Calu3 (cell line): ENCODE measurements at regions of chr5 and their contacts with region 1.

Region 1: DNA sequence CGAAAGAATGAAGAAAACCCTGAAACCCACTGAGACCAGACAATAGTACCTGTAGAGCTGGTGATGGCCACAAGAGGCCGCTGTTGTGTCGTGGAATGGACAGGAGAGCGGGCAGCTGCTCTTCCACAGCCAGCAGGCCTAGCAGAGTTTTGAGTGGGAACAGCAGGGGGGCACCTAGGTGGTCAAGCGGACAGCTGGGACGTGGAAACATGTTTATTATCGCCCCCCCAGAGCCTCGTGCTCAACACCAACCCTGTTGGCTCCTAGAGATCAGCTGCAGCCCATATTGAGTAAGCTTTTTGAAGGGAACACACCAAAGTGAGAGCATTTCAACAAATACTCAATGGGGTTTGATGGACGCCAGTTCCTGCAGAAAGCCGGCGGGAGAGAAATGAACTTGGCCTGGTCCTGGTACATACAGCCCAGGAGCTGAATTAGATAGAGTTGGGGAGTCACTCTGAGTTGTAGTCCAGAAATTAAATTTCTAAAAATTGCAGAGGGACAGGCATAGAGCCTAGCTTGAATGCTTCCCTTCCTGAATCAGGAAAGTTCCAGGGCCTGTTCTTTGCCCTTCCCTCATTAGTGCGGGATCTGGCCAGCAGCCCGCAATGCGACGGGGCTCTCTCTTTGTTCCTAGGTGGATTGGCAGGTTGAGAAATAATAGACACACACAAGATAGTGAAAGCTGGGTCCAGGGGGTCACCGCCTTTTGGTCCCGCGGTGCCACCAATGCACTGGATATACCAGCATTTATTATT is 33.8 kb downstream of the MFAP3 start:
- DNase-seq: peak; percentile 84
- H3K4me3 Mint-ChIP-seq: no peak overlapping the region
- H3K27ac Mint-ChIP-seq: no peak overlapping the region
- H3K4me1 Mint-ChIP-seq: peaks cover 9% of the 10 kb centered on the region
- H3K27me3 Mint-ChIP-seq: peaks cover 49% of the 10 kb centered on the region
- CTCF ChIP-seq: peak; percentile 97

Region 2: DNA sequence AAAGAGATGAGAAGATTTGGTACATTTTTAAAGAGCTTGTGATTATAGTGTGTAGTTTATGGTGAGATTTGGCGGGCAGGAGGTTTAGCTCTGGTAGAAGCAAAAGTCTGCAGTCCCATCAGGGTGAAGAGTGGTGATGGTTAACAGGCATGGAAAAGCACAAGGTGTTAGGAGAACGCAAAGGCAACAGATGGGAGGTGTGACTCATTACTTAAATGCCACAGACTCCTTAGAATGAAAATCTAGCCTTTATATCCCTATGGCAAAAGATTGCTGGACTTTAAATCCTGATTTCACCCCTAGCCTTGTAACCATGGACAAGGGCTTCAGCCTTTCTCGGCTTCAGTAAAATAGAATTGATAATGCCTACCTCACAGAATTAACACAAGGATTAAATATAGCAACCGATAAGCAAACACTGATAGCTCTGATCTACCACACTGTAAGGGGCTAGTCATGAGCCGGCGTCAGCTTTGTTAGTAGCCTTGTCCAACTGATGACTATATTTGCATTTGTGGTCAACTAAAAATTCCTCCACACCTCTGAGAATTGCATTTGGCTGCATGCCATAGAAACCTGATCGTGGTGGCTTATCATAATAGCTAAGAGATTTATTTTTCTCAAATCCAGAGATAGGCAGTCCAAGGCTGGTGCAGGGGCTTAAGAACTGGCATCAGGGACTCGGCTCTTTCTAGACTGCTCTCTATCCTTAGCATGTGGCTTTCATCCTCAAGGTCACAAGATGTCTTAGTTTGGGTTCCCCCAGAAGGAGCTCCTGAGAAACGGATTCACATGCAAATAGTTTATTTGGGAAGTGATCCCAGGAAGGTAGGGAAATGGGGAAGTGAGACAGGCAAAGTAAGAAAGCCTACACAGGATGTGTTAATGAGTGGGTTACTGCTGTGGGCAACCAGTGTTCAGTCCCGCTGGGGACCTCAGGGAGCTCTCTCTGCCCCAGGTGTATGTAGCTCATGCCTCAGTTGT is 14.2 kb before region 1 on chr5:
- CTCF ChIA-PET with region 1: interaction called, 17 read pairs
- intact Hi-C with region 1: no loop called
- DNase-seq: peak; percentile 81
- H3K4me3 Mint-ChIP-seq: no peak overlapping the region
- H3K27ac Mint-ChIP-seq: no peak overlapping the region
- H3K4me1 Mint-ChIP-seq: peaks cover 27% of the 10 kb centered on the region
- H3K27me3 Mint-ChIP-seq: peaks cover 47% of the 10 kb centered on the region
- CTCF ChIP-seq: no peak

Region 3: DNA sequence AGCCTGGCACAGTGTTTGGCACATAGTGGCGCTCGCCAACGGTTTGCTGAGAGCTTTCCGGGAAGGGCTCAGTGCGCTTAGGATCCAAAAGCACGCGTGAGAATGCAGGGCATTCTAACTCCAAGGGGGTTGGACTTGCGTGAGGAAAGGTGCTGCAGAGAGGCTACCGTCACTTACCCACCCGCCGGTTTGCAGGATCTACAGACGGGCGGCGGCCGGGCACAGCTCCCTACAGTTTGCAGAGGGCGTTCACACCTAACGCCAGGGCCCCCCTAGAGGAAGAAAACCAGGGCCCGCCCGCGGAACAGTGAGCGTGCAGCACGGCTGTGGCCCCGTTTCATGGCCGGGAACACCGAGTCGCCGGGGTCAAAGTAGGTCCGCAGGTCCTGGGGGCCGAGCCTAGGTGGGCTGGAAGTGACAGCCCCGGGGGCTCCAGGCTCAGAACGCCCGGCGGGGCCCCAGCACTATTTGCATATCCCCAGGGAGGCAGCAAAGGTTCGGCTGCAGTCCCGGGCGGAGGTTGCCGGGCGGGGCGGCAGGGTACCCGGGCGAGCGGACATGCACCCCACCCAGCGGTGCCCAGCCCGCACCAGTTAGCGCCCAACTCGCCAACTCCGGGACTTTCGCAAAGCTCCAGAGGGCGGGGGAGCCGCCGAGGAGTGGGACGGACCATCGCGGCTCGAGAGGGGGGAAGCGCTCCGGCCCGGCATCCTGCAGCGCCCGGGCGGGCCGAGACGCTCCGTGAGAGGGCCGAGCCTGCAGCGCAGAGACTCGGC is 117.4 kb after region 1 on chr5:
- CTCF ChIA-PET with region 1: interaction called, 20 read pairs
- intact Hi-C with region 1: no loop called
- DNase-seq: peak; percentile 89
- H3K4me3 Mint-ChIP-seq: peak overlapping the region; percentile 92
- H3K27ac Mint-ChIP-seq: no peak overlapping the region
- H3K4me1 Mint-ChIP-seq: peaks cover 49% of the 10 kb centered on the region
- H3K27me3 Mint-ChIP-seq: peaks cover 14% of the 10 kb centered on the region
- CTCF ChIP-seq: peak; percentile 50

Region 4: DNA sequence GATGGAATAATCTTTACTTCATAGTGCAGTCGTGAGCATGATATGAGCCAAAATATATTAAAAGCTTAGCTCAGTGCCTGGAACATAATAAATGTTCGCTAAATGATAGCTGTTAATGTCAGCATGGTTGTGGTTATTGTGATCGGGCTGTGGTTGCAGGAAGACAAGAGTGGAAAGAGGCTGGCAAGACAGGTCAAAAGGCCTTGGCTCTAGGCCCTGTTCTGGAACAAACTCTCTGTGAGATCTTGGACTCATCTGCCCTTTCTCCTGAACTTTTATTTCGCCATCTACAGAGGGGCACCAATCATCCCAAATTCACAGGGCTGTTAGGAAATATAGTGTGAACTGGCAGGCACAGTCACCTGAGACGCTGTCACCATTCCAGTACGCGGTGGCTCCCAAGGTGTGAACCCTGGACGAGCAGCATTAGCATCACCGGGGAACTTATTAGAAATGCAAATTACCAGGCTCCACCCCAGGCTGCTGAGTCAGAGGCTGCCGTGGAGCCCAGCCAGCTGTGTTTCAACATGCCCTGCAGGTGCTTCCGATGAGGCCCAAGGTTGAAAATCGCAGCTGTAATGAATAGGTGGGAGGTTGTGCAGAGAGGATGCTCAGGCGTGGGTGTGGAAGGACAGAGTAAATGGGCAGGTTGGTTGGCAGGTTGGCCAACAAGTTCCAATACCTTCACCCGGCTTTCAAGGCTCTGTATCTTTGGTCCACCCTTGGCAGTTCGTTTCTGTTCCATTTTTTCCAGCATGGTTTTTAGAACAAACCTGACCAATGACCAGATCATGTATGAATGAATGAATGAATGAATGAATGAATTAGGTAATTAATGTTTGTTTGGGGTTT is 323.0 kb after region 1 on chr5:
- CTCF ChIA-PET with region 1: interaction called, 9 read pairs
- intact Hi-C with region 1: loop called (anchors 2 kb)
- DNase-seq: peak; percentile 80
- H3K4me3 Mint-ChIP-seq: no peak overlapping the region
- H3K27ac Mint-ChIP-seq: peak overlapping the region; percentile 34
- H3K4me1 Mint-ChIP-seq: peaks cover 66% of the 10 kb centered on the region
- H3K27me3 Mint-ChIP-seq: no peaks in the 10 kb centered on the region
- CTCF ChIP-seq: no peak

Region 5: DNA sequence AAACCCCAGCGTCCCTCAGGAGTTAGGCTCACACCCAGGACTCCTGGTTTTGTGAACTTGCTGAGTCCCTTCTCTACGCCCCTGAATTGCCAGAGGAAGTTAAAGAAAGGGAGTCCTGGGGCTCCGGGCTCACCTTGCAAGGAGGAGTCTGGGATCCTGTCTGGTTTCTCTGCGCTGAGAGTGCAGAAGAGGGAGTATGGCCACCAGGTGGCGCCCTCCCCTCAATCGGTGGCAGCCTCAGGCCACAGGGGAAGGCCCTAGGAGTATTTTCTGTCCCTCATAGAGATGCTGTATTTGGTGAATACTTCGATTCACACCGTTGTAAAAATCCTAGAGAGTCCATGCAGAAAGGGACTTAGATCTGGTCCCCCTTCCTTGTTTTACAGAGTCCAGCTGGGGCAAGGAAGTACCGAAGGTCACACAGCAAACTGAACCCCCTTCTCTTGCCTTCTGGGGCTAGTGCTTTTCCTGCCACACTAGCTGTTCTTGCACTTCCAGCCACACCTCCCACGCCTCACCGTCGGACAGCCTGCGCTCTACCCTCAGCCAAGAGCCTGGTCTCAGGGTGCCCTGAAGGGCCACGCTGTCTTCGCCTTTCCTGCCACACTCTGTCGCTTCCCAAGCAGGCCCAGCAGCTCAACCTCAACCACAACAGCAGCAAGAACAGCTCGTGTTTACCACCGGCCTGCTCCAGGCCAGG is 395.2 kb after region 1 on chr5:
- CTCF ChIA-PET with region 1: interaction called, 4 read pairs
- intact Hi-C with region 1: loop called (anchors 2 kb)
- DNase-seq: peak; percentile 91
- H3K4me3 Mint-ChIP-seq: no peak overlapping the region
- H3K27ac Mint-ChIP-seq: no peak overlapping the region
- H3K4me1 Mint-ChIP-seq: no peaks in the 10 kb centered on the region
- H3K27me3 Mint-ChIP-seq: peaks cover 52% of the 10 kb centered on the region
- CTCF ChIP-seq: peak; percentile 96